ENCODE measurements at regions of chr2 and their contacts with region 1.

Region 1: DNA sequence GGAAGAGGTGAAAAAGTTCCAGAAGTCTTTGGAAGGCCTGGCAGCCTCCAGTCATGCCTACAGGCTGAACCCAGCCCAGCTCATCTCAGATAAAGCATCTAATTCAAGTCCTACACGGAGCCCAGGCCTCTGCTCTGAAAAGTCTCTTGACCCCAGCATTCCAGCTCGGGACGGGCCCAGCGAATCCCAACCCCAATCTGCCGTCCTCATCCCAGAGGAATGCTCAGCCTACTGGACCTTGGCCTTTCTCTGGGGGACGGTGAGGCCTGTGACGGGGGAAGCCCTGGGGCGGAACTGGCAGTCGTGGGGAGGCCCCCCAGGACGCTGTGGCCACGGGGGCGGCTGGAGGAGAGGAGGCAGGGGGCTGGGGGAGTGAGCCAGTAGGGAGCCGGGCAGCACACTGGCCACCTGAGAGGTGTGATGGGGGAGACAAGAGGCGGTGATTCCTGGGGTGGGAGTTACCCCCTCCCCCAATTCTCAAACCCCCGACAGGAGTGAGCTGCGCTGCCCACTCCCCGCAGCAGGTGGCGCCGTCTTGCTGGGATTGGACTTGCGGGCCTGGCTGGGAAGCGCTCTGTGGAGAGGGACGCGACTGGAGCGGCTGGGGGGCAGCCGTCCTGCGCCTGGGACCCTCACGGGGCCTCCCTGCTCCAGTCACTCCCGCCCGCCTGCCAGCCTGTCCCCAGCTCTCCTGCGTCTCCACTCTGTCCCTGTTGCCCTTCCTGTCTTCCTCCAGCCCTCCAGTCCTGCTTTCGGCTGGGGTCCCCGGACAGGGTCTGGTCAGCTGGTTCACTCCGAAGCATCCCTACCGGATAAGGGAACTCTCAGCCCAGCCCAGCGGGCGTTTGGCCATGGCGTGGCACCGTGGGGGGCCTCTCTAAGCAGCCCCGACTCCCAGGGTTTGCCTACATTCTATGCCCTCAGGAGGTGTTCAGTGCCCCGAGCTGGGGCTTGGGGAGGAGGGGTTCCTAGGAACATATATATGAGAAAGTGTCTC is 182.6 kb upstream of the HAAO start:
- DNase-seq: no peak
- H3K4me3 ChIP-seq: peak overlapping the region; percentile 12 to 65 (median 41)
- H3K27ac ChIP-seq: peak overlapping the region; percentile 58 to 84 (median 72)
- H3K4me1 ChIP-seq: peaks cover 13 to 44% (median 15%) of the 10 kb centered on the region in 3 donors
- H3K27me3 ChIP-seq: no peaks in the 10 kb centered on the region
- CTCF ChIP-seq: peak; percentile 90 to 95 (median 92)
- POLR2A ChIP-seq: no peak

Region 2: DNA sequence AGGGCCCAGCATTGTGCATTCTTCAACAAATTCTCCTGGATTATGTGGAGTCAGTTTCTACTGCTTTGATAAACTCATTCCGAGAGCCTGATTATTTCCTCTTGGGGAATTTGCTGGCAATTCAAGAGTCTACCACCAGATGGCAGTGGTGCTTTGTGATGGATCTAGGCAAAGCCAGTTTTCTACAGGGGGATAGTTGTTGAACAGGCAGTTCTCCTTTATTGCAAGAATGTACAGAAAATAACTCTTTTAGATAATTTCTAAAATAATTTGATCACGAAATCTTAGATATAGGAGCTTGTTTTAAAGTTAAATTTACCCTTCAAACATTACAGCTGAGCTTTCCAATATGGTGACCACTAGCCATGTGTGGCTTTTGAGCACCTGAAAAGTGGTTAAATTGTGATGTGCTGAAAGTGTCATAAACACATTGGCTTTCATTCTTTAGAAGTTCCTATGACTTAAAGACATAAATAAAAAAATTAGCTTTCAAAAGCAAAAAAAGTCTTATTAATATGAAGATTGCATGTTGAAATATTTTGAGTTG is 115.9 kb before region 1 on chr2:
- intact Hi-C with region 1: no loop called
- DNase-seq: no peak
- H3K4me3 ChIP-seq: no peak overlapping the region
- H3K27ac ChIP-seq: peak overlapping the region in 3 of 4 donors; percentile 30 to 90 (median 83)
- H3K4me1 ChIP-seq: peaks cover 24 to 62% (median 31%) of the 10 kb centered on the region in 3 donors
- H3K27me3 ChIP-seq: no peaks in the 10 kb centered on the region
- CTCF ChIP-seq: peak; percentile 89 to 97 (median 93)
- POLR2A ChIP-seq: no peak

Region 3: GRCh38 chr2:43032213-43033015 is 57.4 kb after region 1 on chr2:
- intact Hi-C with region 1: no loop called
- DNase-seq: no peak
- H3K4me3 ChIP-seq: no peak overlapping the region
- H3K27ac ChIP-seq: peak overlapping the region; percentile 47 to 81 (median 74)
- H3K4me1 ChIP-seq: peaks cover 8 to 25% (median 9%) of the 10 kb centered on the region in 3 donors
- H3K27me3 ChIP-seq: no peaks in the 10 kb centered on the region
- CTCF ChIP-seq: no peak
- POLR2A ChIP-seq: no peak

Region 4: GRCh38 chr2:43127208-43127940 is 152.4 kb after region 1 on chr2:
- intact Hi-C with region 1: no loop called
- DNase-seq: peak; percentile 35
- H3K4me3 ChIP-seq: no peak overlapping the region
- H3K27ac ChIP-seq: peak overlapping the region; percentile 13 to 90 (median 82)
- H3K4me1 ChIP-seq: peaks cover 29 to 67% (median 30%) of the 10 kb centered on the region in 3 donors
- H3K27me3 ChIP-seq: no peaks in the 10 kb centered on the region
- CTCF ChIP-seq: peak in 5 of 6 experiments; percentile 63 to 84 (median 66)
- POLR2A ChIP-seq: no peak

Region 5: DNA sequence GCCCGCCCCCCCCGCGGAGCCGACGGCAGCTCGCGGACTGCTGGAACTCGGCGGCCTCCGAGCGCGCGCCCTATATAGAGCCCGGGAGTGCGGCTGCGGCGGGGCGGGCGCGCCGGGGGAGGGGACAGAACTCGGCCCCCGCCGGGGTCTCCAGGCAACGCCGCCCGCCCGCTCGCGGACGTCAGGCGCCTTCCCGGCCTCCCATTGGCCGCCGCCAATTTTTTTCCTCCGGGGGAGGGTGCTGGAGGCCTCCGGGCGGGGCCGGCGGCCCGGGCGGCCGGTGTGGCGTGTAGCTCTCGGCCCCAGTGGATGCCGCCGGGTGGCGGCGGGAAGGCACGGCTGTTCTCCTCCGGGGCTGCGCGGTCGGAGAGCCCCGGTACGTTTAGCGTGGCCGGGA is 251.5 kb after region 1 on chr2 and contains the start of gene ZFP36L2:
- intact Hi-C with region 1: loop called (anchors 10 kb)
- DNase-seq: peak; percentile 84
- H3K4me3 ChIP-seq: peak within 1 kb of the TSS; percentile 79 to 97 (median 92)
- H3K27ac ChIP-seq: peak within 1 kb of the TSS; percentile 96 to 100 (median 98)
- H3K4me1 ChIP-seq: peaks cover 14 to 54% (median 18%) of the 10 kb centered on the region in 3 donors
- H3K27me3 ChIP-seq: no peaks in the 10 kb centered on the region
- CTCF ChIP-seq: peak in 2 of 6 experiments; percentile 21 to 22
- POLR2A ChIP-seq: peak in 3 of 4 donors; percentile 72 to 99 (median 99)
- total RNA-seq, gene ZFP36L2: 26.6 to 87.7 (median 41.8) TPM

Region 6: GRCh38 chr2:43251171-43251731 is 276.2 kb after region 1 on chr2:
- intact Hi-C with region 1: no loop called
- DNase-seq: no peak
- H3K4me3 ChIP-seq: no peak overlapping the region
- H3K27ac ChIP-seq: peak overlapping the region; percentile 45 to 89 (median 74)
- H3K4me1 ChIP-seq: peaks cover 0 to 27% (median 11%) of the 10 kb centered on the region in 3 donors
- H3K27me3 ChIP-seq: no peaks in the 10 kb centered on the region
- CTCF ChIP-seq: no peak
- POLR2A ChIP-seq: no peak